Pancreas (tissue), 10 donors: ENCODE measurements at regions of chr3 and their contacts with region 1.

Region 1: DNA sequence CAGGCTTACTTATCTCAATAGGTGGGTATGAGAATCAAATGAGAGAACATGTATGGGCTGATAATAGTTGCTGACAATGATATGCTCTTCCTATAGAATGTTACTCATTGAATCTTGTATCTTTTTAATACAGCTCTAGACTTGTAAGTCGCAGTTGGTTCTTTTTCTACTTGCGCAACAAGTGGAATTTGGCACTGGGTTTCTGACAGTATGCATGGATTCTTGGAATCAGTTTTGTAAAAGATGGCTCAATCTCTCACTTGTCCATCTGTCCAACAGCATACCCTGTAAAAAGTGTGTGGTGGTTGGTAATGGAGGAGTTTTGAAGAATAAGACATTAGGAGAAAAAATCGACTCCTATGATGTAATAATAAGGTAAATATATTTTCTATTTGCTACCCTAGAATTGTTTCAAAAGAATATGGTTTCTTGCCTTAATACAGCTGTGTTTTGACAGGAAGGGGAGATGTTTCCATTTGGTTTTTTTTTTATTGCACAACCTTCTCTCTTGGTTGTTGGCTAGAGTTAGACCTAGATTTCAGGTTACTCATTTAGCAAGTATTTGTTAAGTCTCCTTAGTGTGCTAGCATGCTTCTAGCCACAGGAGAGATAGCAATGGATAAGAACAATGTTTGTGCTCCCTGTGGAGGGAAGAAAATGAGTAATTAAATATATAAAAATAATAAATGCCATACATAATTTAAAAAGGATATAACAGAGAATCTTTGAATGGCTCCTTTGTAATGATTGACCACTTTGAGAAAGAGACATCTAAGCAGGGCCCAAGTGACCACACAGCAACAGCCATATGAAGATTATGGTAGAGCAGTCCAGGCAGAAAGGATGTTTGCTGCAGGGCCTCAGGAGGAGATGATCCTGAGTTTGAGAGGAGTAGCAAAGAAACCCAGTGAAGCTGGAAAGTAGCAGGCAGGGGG is 21.8 kb downstream of the ST3GAL6 start:
- DNase-seq: no peak
- ATAC-seq: peak; percentile 60 to 68 (median 66)
- H3K4me3 ChIP-seq: no peak overlapping the region
- H3K27ac ChIP-seq: peak overlapping the region in 1 of 4 donors; percentile 21
- H3K4me1 ChIP-seq: peaks cover 9 to 20% (median 12%) of the 10 kb centered on the region in 3 donors
- H3K27me3 ChIP-seq: no peaks in the 10 kb centered on the region
- CTCF ChIP-seq: no peak

Region 2: DNA sequence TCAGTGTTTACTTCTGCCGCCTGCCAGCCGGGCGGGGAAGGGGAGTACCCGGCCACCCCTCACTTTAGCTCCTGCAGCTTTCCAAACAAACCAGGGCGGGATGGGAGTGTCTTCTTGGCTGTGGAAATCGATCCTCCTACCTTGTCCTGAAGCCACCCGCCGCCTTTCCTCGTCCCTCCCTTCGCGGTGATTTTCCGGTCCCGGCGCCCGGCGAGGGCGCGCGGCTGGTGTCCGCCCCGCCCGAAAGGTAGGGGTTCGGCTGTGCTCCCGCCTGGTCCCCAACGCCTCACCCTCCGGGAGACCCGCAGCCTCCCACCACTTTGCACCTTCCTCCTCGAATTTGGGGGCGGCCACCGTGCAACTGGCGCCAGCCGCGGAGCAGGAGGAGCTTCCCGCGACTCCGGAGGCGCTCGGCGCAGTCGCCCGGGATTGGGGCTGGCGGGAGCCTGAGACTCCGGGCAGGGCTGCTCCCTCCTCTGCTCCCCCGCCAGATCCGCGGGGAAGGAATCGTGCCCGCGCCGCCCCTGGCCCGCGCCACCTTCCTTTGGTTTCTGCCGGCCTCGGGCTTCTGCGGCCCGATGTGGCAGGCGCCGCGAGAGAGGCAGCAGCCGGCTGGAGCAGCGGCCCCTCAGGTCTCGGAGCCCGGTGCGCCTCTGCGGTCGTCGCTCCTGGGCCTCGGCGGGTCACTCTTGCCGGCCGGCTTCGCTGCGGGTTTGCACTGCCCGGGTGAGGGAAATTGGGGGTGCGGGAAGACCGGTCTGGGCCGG is 52.5 kb before region 1 on chr3:
- intact Hi-C with region 1: loop called in 1 of 3 experiments (anchors 10 kb)
- DNase-seq: peak; percentile 27 to 78 (median 47)
- ATAC-seq: peak; percentile 71 to 80 (median 77)
- H3K4me3 ChIP-seq: peak overlapping the region; percentile 54 to 83 (median 69)
- H3K27ac ChIP-seq: peak overlapping the region; percentile 10 to 77 (median 65)
- H3K4me1 ChIP-seq: no peaks in the 10 kb centered on the region
- H3K27me3 ChIP-seq: no peaks in the 10 kb centered on the region
- CTCF ChIP-seq: no peak